ENCODE measurements at regions of chr19 and their contacts with region 1.

Region 1: GRCh38 chr19:46860125-46860845 is 512 bp upstream of the ARHGAP35 start:
- DNase-seq: peak; percentile 96 to 99
- H3K4me3 ChIP-seq: peak overlapping the region; percentile 79
- H3K27ac ChIP-seq: peak overlapping the region; percentile 87
- H3K4me1 ChIP-seq: peaks cover 47% of the 10 kb centered on the region
- H3K27me3 ChIP-seq: no peaks in the 10 kb centered on the region
- CTCF ChIP-seq: no peak

Region 2: DNA sequence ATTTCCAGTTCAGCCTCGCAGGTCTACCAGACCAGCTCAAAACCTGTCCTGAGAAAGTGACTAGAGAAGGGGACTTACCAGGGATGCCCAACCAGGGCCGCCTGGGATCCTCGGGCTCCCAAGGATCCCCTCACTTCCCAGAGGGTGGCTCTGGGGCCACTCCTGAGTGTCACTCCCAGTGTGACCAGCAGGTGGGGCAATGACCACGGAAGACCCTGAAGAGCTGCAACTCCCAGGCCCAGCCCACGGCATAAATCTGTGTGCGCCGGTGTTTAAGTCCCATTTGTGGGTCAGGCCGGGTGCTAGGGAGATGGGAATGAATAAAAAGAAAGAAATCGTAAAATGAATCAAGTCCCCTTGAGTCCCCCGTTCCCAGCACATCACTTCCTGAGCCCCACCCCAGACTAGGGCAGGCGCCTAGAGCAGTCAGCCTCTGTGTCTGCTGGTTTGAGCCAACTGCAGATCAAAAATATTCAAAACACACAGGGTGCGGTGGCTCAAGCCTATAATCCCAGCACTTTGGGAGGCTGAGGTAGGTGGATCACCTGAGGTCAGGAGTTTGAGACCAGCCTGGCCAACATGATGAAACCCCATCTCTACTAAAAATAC is 246.1 kb before region 1 on chr19:
- CTCF ChIA-PET with region 1: interaction called, 21 read pairs
- POLR2A ChIA-PET with region 1: no interaction called
- intact Hi-C with region 1: no loop called
- DNase-seq: peak; percentile 55 to 79
- H3K4me3 ChIP-seq: no peak overlapping the region
- H3K27ac ChIP-seq: no peak overlapping the region
- H3K4me1 ChIP-seq: no peaks in the 10 kb centered on the region
- H3K27me3 ChIP-seq: no peaks in the 10 kb centered on the region
- CTCF ChIP-seq: peak; percentile 97

Region 3: GRCh38 chr19:46713781-46714443 is 146.4 kb before region 1 on chr19:
- CTCF ChIA-PET with region 1: no interaction called
- POLR2A ChIA-PET with region 1: no interaction called
- intact Hi-C with region 1: no loop called
- DNase-seq: peak; percentile 86 to 92
- H3K4me3 ChIP-seq: peak overlapping the region; percentile 76
- H3K27ac ChIP-seq: peak overlapping the region; percentile 69
- H3K4me1 ChIP-seq: peaks cover 27% of the 10 kb centered on the region
- H3K27me3 ChIP-seq: no peaks in the 10 kb centered on the region
- CTCF ChIP-seq: no peak

Region 4: DNA sequence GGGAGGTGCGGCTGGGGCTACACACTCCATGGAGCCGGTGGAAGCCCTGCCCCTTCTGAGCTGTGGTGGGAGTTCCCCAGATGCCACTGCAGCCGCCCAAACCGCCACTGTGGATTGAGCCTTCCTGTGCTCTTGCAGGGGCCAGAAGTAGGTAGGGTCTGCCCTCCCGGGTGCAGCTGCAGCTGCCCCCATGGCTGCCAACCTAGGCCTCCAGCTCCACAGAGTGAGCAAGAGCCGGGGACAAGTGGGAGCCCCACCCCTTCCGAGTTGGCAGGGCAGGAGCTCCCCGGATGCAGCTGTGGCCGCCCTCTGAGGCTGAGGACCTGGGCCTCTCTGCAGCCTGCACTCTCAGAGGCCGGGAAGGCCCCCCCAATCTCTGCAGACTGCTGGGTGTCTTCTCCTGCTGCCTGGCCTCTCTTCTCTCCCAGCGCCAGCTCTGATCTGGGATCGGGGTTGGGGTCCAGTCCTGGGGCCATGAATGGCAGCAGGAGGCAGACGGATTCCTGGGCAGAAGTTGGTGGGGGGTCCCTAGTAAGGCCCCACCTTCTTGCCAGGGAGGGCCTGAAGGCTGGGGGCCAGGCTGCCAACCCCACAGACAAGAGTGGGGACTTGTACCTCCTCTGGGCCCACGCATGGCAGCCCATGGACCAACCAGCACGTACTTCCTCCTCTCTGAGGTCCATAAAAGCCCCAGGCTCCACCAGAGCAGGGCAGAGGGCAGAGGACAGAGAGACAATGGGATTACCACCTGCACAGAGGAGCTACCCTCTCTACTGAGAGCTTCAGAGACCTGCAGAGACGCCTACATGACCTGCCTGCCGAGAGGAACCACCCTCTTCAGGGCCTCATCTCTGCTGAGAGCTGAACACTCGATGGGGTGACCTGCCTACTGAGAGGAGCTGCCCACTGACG is 38.5 kb before region 1 on chr19:
- CTCF ChIA-PET with region 1: no interaction called
- POLR2A ChIA-PET with region 1: no interaction called
- intact Hi-C with region 1: no loop called
- DNase-seq: no peak
- H3K4me3 ChIP-seq: no peak overlapping the region
- H3K27ac ChIP-seq: no peak overlapping the region
- H3K4me1 ChIP-seq: peaks cover 34% of the 10 kb centered on the region
- H3K27me3 ChIP-seq: no peaks in the 10 kb centered on the region
- CTCF ChIP-seq: no peak

Region 5: GRCh38 chr19:46904114-46905060 is 44.1 kb after region 1 on chr19:
- CTCF ChIA-PET with region 1: interaction called, 4 read pairs
- POLR2A ChIA-PET with region 1: interaction called, 6 read pairs
- intact Hi-C with region 1: loop called (anchors 1 kb)
- DNase-seq: no peak
- H3K4me3 ChIP-seq: 0 out of 2 replicates have a peak overlapping the region, but pooled peaks have one; percentile 32
- H3K27ac ChIP-seq: peak overlapping the region; percentile 95
- H3K4me1 ChIP-seq: peaks cover 62% of the 10 kb centered on the region
- H3K27me3 ChIP-seq: no peaks in the 10 kb centered on the region
- CTCF ChIP-seq: no peak

Region 6: GRCh38 chr19:46975925-46976782 is 115.9 kb after region 1 on chr19:
- CTCF ChIA-PET with region 1: no interaction called
- POLR2A ChIA-PET with region 1: interaction called, 4 read pairs
- intact Hi-C with region 1: loop called (anchors 5 kb)
- DNase-seq: peak; percentile 79 to 85
- H3K4me3 ChIP-seq: no peak overlapping the region
- H3K27ac ChIP-seq: peak overlapping the region; percentile 45
- H3K4me1 ChIP-seq: peaks cover 30% of the 10 kb centered on the region
- H3K27me3 ChIP-seq: no peaks in the 10 kb centered on the region
- CTCF ChIP-seq: no peak

Region 7: GRCh38 chr19:47243776-47244547 is 383.7 kb after region 1 on chr19:
- CTCF ChIA-PET with region 1: no interaction called
- POLR2A ChIA-PET with region 1: interaction called, 36 read pairs
- intact Hi-C with region 1: no loop called
- DNase-seq: peak; percentile 86 to 95
- H3K4me3 ChIP-seq: peak overlapping the region; percentile 71
- H3K27ac ChIP-seq: peak overlapping the region; percentile 87
- H3K4me1 ChIP-seq: peaks cover 26% of the 10 kb centered on the region
- H3K27me3 ChIP-seq: no peaks in the 10 kb centered on the region
- CTCF ChIP-seq: peak; percentile 98